ENCODE measurements at regions of chr9 and their contacts with region 1.

Region 1: GRCh38 chr9:110650991-110651411 is 17.6 kb upstream of the MUSK start:
- DNase-seq: no peak
- H3K4me3 ChIP-seq: no peak overlapping the region
- H3K27ac ChIP-seq: peak overlapping the region; percentile 45 to 75
- H3K4me1 ChIP-seq: peaks cover 5% of the 10 kb centered on the region
- H3K27me3 ChIP-seq: no peaks in the 10 kb centered on the region
- CTCF ChIP-seq: no peak
- POLR2A ChIP-seq: no peak

Region 2: GRCh38 chr9:109940561-109940960 is 710.4 kb before region 1 on chr9:
- intact Hi-C with region 1: no loop called
- DNase-seq: no peak
- H3K4me3 ChIP-seq: no peak overlapping the region
- H3K27ac ChIP-seq: no peak overlapping the region
- H3K4me1 ChIP-seq: no peaks in the 10 kb centered on the region
- H3K27me3 ChIP-seq: no peaks in the 10 kb centered on the region
- CTCF ChIP-seq: no peak
- POLR2A ChIP-seq: no peak

Region 3: GRCh38 chr9:111037381-111038305 is 386.6 kb after region 1 on chr9:
- intact Hi-C with region 1: loop called (anchors 10 kb)
- DNase-seq: peak; percentile 46
- H3K4me3 ChIP-seq: peak overlapping the region; percentile 73 to 78
- H3K27ac ChIP-seq: peak overlapping the region; percentile 88 to 95
- H3K4me1 ChIP-seq: peaks cover 25% of the 10 kb centered on the region
- H3K27me3 ChIP-seq: no peaks in the 10 kb centered on the region
- CTCF ChIP-seq: no peak
- POLR2A ChIP-seq: no peak

Measured in testis (tissue), 5 donors.